ENCODE measurements at regions of chrX and their contacts with region 1.

Region 1: DNA sequence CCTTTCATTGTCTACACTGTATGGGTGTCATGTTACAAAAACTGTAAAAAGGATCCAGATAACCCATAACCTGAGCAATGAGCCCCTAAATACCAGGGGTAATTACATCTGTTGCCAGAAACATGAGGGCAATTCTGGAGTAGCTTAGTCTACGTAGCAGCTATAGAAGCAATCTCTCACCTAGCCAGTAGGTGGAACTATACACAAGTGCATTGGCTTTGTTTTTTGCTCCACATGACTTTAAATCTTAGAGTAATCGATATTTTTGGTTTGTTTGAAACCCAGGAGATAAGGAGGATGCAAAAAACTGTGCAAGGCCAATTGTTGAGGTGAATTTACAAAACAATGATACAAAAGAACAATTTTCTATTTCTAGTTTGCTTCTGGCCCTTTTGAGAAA is 57.5 kb downstream of the GPR82 start:
- DNase-seq: peak; percentile 23
- H3K4me3 ChIP-seq: no peak overlapping the region
- H3K27ac ChIP-seq: no peak overlapping the region
- H3K4me1 ChIP-seq: peaks cover 7% of the 10 kb centered on the region
- H3K27me3 ChIP-seq: peaks cover 2% of the 10 kb centered on the region
- CTCF ChIP-seq: peak; percentile 77 to 83

Region 2: GRCh38 chrX:41923257-41923969 is 141.9 kb after region 1 on chrX and contains the start of gene CASK:
- CTCF ChIA-PET with region 1: no interaction called
- dilution Hi-C with region 1: no loop called
- in situ Hi-C with region 1: no loop called
- intact Hi-C with region 1: loop called (anchors 5 kb)
- DNase-seq: peak; percentile 88
- H3K4me3 ChIP-seq: peak within 1 kb of the TSS; percentile 65 to 79 (median 71)
- H3K27ac ChIP-seq: peak within 1 kb of the TSS; percentile 69
- H3K4me1 ChIP-seq: no peaks in the 10 kb centered on the region
- H3K27me3 ChIP-seq: peaks cover 1% of the 10 kb centered on the region
- CTCF ChIP-seq: no peak
- total RNA-seq, gene CASK: 54.0 to 57.9 TPM

Region 3: GRCh38 chrX:41933546-41933945 is 152.0 kb after region 1 on chrX:
- CTCF ChIA-PET with region 1: no interaction called
- dilution Hi-C with region 1: no loop called
- in situ Hi-C with region 1: no loop called
- intact Hi-C with region 1: no loop called
- DNase-seq: no peak
- H3K4me3 ChIP-seq: no peak overlapping the region
- H3K27ac ChIP-seq: no peak overlapping the region
- H3K4me1 ChIP-seq: no peaks in the 10 kb centered on the region
- H3K27me3 ChIP-seq: peaks cover 2% of the 10 kb centered on the region
- CTCF ChIP-seq: no peak

Region 4: GRCh38 chrX:42290608-42291007 is 509.1 kb after region 1 on chrX:
- CTCF ChIA-PET with region 1: no interaction called
- dilution Hi-C with region 1: no loop called
- in situ Hi-C with region 1: no loop called
- intact Hi-C with region 1: loop called (anchors 5 kb)
- DNase-seq: no peak
- H3K4me3 ChIP-seq: no peak overlapping the region
- H3K27ac ChIP-seq: no peak overlapping the region
- H3K4me1 ChIP-seq: no peaks in the 10 kb centered on the region
- H3K27me3 ChIP-seq: peaks cover 4% of the 10 kb centered on the region
- CTCF ChIP-seq: peak; percentile 18 to 48

Region 5: DNA sequence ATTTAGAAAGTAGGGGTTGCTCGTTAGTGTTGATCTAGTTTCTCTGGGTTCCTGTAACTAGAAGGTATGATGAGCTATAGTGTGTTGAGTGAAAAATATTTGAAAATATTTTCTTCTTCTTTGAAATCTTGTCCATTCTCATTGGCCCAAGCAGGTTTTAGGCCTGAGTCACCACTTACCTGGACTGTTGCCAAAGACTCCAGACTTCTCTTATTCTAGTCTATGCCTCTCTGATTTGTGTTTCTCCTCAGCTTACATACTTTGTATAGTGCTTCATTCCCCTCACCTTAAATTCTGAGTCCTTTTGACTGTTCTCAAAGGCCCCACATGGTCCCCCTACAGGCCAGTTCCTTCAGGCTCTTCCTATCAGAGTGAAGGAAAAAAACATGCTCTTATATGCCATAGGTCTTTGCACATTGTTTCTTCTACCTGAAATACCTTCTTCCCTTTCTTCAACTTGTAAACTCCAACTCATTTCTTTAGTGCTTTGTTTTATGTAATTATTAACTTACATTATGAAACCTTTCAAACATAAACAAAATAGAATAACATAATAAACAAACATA is 738.2 kb after region 1 on chrX:
- CTCF ChIA-PET with region 1: no interaction called
- dilution Hi-C with region 1: no loop called
- in situ Hi-C with region 1: loop called in 1 of 2 experiments (anchors 25 kb)
- intact Hi-C with region 1: no loop called
- DNase-seq: peak; percentile 51
- H3K4me3 ChIP-seq: no peak overlapping the region
- H3K27ac ChIP-seq: no peak overlapping the region
- H3K4me1 ChIP-seq: no peaks in the 10 kb centered on the region
- H3K27me3 ChIP-seq: peaks cover 3% of the 10 kb centered on the region
- CTCF ChIP-seq: peak; percentile 6 to 8

Region 6: DNA sequence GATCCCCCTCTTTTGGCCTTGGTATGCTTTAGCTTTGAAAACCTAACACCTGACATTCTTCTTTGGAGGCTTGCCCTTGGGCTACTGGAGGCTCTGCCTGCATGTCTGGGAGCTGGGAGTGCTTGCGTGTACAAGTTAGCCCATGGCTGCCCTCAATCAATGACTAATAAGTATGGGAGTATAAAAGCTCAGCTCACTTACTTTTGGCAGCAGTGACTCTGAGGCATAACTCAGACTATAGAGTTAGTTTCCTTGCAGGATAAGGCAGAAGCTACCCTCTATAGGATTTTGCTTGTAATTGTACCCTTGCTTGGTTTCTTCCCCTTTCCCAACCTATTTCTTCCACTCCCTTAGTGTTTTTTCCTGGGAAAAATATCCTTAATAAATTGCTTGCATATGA is 748.5 kb after region 1 on chrX:
- CTCF ChIA-PET with region 1: interaction called, 4 read pairs
- dilution Hi-C with region 1: no loop called
- in situ Hi-C with region 1: loop called in 1 of 2 experiments (anchors 25 kb)
- intact Hi-C with region 1: no loop called
- DNase-seq: peak; percentile 80
- H3K4me3 ChIP-seq: no peak overlapping the region
- H3K27ac ChIP-seq: no peak overlapping the region
- H3K4me1 ChIP-seq: peaks cover 3% of the 10 kb centered on the region
- H3K27me3 ChIP-seq: no peaks in the 10 kb centered on the region
- CTCF ChIP-seq: peak; percentile 24 to 54

Region 7: DNA sequence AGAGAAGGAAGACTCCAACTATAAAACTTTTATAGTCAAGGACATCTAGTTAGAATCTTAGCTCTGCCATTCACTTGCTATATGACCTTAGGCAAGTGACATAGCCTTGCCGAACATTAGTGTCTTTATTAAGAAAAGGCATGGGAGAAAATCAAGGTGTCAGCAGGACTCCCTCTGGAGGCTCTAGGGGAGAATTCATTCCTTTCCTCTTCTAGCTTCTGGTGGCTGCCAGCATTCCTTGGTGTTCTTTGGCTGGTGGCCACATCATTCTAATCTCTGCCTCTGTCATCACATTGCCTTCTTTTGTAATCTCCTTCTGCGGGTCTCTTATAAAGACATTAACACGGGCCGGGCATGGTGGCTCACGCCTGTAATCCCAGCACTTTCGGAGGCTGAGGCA is 896.6 kb after region 1 on chrX:
- CTCF ChIA-PET with region 1: no interaction called
- dilution Hi-C with region 1: no loop called
- in situ Hi-C with region 1: no loop called
- intact Hi-C with region 1: loop called (anchors 10 kb)
- DNase-seq: peak; percentile 9
- H3K4me3 ChIP-seq: no peak overlapping the region
- H3K27ac ChIP-seq: no peak overlapping the region
- H3K4me1 ChIP-seq: no peaks in the 10 kb centered on the region
- H3K27me3 ChIP-seq: peaks cover 2% of the 10 kb centered on the region
- CTCF ChIP-seq: peak; percentile 13 to 48

Region 8: DNA sequence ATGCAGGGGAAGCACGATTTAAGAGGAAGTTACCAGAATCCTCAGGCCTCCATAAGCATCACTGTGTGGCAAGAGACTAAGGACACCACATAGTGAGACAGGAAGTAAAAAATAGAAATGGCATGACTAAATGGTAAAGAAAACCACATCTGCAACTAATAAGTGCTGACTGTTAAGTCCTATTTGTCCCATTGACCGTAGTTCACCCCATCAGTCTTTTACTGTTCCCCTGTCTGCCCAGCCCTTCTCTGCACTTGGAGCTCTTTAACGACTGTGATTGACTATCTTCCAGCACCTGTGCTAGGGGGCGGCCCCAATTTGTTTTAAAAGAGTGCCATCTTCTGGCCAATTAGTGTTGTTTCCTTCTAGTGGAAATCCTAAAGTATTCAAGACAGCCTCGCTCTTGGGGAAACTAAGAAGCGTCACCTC is 1968.8 kb after region 1 on chrX:
- CTCF ChIA-PET with region 1: no interaction called
- dilution Hi-C with region 1: no loop called
- in situ Hi-C with region 1: no loop called
- intact Hi-C with region 1: loop called (anchors 1 kb)
- DNase-seq: peak; percentile 51
- H3K4me3 ChIP-seq: no peak overlapping the region
- H3K27ac ChIP-seq: no peak overlapping the region
- H3K4me1 ChIP-seq: no peaks in the 10 kb centered on the region
- H3K27me3 ChIP-seq: no peaks in the 10 kb centered on the region
- CTCF ChIP-seq: peak; percentile 47 to 52

Measured in mammary epithelial cell (primary cell).